ENCODE measurements at regions of chr17 and their contacts with region 1.

Region 1: DNA sequence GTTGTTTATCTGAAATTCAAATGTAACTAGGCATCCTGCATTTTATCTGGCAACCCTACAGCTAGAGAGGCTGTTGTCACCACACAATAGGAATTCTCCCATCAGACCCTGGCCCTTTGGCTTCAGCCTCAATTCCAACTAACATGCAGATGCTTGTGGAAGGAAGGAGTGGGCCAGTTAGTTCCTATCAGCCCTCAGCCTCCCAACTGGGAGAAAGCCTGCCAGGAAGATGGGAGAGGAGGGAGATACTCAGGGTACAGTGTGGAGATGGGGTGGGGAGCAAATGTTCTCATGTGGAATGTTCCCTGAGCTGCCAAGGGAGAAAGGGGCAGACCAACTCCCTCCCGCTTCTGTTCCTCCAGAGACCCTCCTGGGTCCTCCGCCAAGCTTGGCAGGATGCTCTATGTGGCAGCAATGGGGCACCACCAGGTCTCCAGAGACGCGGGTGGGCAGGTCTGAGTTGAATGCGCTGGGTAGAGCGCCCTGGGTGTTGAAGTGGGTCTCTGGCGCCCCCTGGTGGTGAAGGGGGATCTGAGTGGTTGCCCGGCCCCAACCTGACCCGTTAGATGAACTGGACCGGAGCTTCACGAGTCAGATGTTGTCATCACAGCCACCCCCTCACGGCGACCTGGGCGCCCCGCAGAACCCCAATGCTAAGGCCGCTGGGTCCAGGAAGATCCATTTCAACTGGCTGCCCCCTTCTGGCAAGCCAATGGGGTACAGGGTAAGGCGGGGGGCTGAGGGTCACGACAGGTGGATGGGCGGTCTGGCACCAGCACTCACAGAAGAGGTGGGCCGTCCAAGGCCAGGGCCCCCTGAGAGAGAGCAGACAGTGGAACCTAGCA is 15.2 kb downstream of the GALK1 start:
- DNase-seq: peak; percentile 80 to 88
- ATAC-seq: peak; percentile 80 to 91
- H3K4me3 ChIP-seq: no peak overlapping the region
- H3K27ac ChIP-seq: peak overlapping the region; percentile 43 to 73; a peak in 5 of 6 replicates
- H3K4me1 ChIP-seq: peaks cover 12% of the 10 kb centered on the region
- CTCF ChIP-seq: peak; percentile 97
- EP300 ChIP-seq: no peak
- POLR2A ChIP-seq: no peak
- RAD21 ChIP-seq: peak; percentile 93 to 94

Region 2: DNA sequence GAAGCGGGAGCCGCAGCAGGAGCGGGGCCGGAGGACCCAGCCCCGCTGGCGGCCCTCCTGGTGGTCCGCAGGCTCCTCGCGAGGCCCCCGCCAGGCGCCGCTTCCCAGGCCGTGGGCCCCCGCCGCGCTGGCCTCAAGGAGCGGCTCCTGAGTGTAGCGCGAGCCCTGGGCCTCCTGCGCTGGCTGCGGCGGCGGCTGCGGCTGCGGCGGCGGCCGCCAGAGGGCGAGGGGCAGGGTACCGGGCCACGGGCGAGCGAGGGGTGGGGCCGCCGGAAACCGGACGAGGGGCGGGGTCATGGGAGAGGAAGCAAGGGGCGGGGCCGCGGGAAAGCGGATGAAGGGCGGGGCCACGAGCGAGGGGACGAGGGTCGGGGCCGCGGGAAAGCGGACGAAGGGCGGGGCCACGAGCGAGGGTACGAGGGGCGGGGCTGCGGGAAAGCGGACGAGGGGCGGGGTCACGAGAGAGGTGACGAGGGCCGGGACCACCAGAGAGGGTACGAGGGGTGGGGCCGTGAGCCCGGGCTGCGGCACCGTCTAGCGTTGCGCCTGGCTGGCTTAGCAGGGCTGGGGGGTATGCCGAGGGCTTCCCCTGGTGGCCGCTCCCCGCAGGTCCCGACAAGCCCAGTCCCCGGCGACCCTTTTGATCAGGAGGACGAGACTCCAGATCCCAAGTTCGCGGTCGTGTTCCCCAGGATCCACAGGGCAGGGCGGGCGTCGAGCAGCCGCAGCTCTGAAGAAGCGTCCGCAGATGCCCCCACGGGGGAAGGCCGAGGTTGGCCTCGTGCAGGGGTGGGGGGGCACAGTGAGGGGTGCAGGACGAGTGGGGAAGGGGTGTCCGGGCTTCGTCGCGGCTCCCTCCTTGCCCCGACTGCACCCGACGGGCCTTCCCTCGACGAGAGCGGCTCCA is 160.5 kb before region 1 on chr17:
- CTCF ChIA-PET with region 1: interaction called, 14 read pairs
- POLR2A ChIA-PET with region 1: no interaction called
- DNase-seq: peak; percentile 91 to 96
- ATAC-seq: peak; percentile 80 to 90
- H3K4me3 ChIP-seq: peak overlapping the region; percentile 57
- H3K27ac ChIP-seq: peak overlapping the region; percentile 90
- H3K4me1 ChIP-seq: peaks cover 21% of the 10 kb centered on the region
- CTCF ChIP-seq: peak; percentile 87
- EP300 ChIP-seq: no peak
- POLR2A ChIP-seq: peak; percentile 23
- RAD21 ChIP-seq: peak; percentile 50 to 83

Region 3: GRCh38 chr17:75614006-75614405 is 135.8 kb before region 1 on chr17:
- CTCF ChIA-PET with region 1: interaction called, 1,931 read pairs
- POLR2A ChIA-PET with region 1: no interaction called
- DNase-seq: peak in 1 of 2 experiments; percentile 44
- ATAC-seq: peak; percentile 7 to 61; a peak in 3 of 6 replicates
- H3K4me3 ChIP-seq: no peak overlapping the region
- H3K27ac ChIP-seq: peak overlapping the region; percentile 52 to 92; a peak in 4 of 6 replicates
- H3K4me1 ChIP-seq: peaks cover 53% of the 10 kb centered on the region
- CTCF ChIP-seq: peak; percentile 31; the same call in 2 of the 3 replicates
- EP300 ChIP-seq: no peak
- POLR2A ChIP-seq: no peak
- RAD21 ChIP-seq: peak; percentile 54 to 59

Region 4: GRCh38 chr17:75712446-75712845 is 37.3 kb before region 1 on chr17:
- CTCF ChIA-PET with region 1: interaction called, 186 read pairs
- POLR2A ChIA-PET with region 1: interaction called, 4 read pairs
- DNase-seq: no peak
- ATAC-seq: no peak
- H3K4me3 ChIP-seq: no peak overlapping the region
- H3K27ac ChIP-seq: peak overlapping the region in 1 of 2 experiments; percentile 22; a peak in 1 of 6 replicates
- H3K4me1 ChIP-seq: peaks cover 27% of the 10 kb centered on the region
- CTCF ChIP-seq: no peak
- EP300 ChIP-seq: no peak
- POLR2A ChIP-seq: no peak
- RAD21 ChIP-seq: no peak

Region 5: DNA sequence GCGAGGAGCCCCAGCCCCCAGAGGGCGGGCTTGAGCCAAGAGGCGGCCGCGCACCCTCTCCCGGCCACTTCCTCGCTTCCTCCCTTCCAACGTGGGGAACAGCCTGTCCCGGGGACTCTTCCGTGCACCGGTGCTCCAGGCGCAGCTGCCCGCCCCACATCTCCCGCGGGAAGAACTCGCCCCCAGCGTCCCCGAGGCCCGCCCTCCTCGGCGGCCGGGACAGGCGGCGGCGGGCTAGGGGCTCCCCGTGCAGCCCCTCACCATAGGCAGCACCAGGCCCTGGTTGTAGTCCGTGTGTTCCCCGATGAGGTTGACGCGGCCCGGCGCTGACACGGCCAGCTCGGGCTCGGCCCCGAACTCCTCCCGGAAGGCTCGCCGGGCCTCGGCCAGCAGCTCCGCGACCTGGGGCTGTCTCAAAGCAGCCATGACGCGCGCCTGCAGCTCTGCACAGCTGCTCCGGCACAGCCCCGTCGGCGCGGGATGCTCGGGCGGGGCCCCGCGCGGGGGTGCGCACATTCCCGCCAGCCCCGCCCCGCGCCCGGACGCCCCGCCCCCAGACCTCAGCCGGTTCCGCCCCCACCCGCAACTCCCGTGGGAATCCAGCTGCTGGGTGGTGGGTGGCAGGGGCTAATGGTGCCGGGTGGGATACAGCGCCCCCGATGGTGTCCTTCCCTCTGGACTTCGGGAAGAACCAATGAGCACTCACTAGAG is 15.1 kb after region 1 on chr17 and contains the start of gene GALK1:
- CTCF ChIA-PET with region 1: interaction called, 283 read pairs
- POLR2A ChIA-PET with region 1: interaction called, 3 read pairs
- DNase-seq: peak; percentile 78 to 81
- ATAC-seq: peak; percentile 89 to 91
- H3K4me3 ChIP-seq: peak within 1 kb of the TSS; percentile 68
- H3K27ac ChIP-seq: peak within 1 kb of the TSS; percentile 83 to 92
- H3K4me1 ChIP-seq: peaks cover 13% of the 10 kb centered on the region
- CTCF ChIP-seq: peak; percentile 65
- EP300 ChIP-seq: no peak
- POLR2A ChIP-seq: peak; percentile 71
- RAD21 ChIP-seq: peak; percentile 59 to 66
- polyA plus RNA-seq, gene GALK1: 20.7 and 21.3 TPM in 2 replicates

Region 6: GRCh38 chr17:75814900-75815373 is 65.2 kb after region 1 on chr17:
- CTCF ChIA-PET with region 1: interaction called, 16 read pairs
- POLR2A ChIA-PET with region 1: no interaction called
- DNase-seq: peak in 1 of 2 experiments; percentile 46
- ATAC-seq: peak; percentile 73 to 80
- H3K4me3 ChIP-seq: no peak overlapping the region
- H3K27ac ChIP-seq: peak overlapping the region; percentile 49 to 70; a peak in 4 of 6 replicates
- H3K4me1 ChIP-seq: peaks cover 14% of the 10 kb centered on the region
- CTCF ChIP-seq: no peak
- EP300 ChIP-seq: no peak
- POLR2A ChIP-seq: no peak
- RAD21 ChIP-seq: no peak

Region 7: GRCh38 chr17:76048711-76049110 is 298.9 kb after region 1 on chr17:
- CTCF ChIA-PET with region 1: no interaction called
- POLR2A ChIA-PET with region 1: no interaction called
- DNase-seq: no peak
- ATAC-seq: no peak
- H3K4me3 ChIP-seq: no peak overlapping the region
- H3K27ac ChIP-seq: no peak overlapping the region
- H3K4me1 ChIP-seq: peaks cover 3% of the 10 kb centered on the region; the same call in 2 of the 3 replicates
- CTCF ChIP-seq: no peak
- EP300 ChIP-seq: no peak
- POLR2A ChIP-seq: no peak
- RAD21 ChIP-seq: no peak

Measured in A549 (cell line).